AG04449 (cell line): ENCODE measurements at regions of chr17 and their contacts with region 1.

Region 1: GRCh38 chr17:31425282-31426040 is 34.0 kb downstream of the RAB11FIP4 start:
- DNase-seq: no peak
- H3K4me3 ChIP-seq: no peak overlapping the region
- CTCF ChIP-seq: no peak

Region 2: DNA sequence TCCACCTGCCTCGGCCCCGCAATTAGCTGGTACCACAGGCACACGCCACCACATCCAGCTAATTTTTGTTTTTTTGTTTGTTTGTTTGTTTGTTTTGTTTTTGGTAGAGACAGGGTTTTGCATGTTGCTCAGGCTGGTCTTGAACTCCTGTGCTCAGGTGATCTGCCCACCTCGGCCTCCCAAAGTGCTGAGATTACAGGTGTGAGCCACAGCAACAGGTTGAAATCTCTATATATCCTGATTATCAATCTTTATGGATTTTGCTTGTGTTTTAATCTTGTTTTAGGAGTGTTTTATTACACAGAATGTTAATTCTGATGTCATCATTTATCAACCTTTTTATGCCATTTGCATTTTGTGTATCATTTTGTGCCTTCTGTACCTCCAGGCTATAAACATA is 14.3 kb after region 1 on chr17:
- CTCF ChIA-PET with region 1: interaction called, 13 read pairs
- POLR2A ChIA-PET with region 1: no interaction called
- DNase-seq: no peak
- H3K4me3 ChIP-seq: no peak overlapping the region
- CTCF ChIP-seq: no peak